Right cardiac atrium (tissue), 5 donors: ENCODE measurements at regions of chr10 and their contacts with region 1.

Region 1: GRCh38 chr10:79195091-79195923 is 126.5 kb downstream of the ZMIZ1 start:
- DNase-seq: peak; percentile 87 to 96 (median 93)
- ATAC-seq: peak; percentile 73 to 77
- H3K4me3 ChIP-seq: no peak overlapping the region
- H3K27ac ChIP-seq: peak overlapping the region; percentile 39
- H3K4me1 ChIP-seq: peaks cover 28% of the 10 kb centered on the region
- H3K27me3 ChIP-seq: no peaks in the 10 kb centered on the region

Region 2: GRCh38 chr10:78047314-78047891 is 1147.9 kb before region 1 on chr10:
- intact Hi-C with region 1: loop called (anchors 5 to 10 kb)
- DNase-seq: peak; percentile 89 to 95 (median 92)
- ATAC-seq: peak; percentile 81 to 86
- H3K4me3 ChIP-seq: no peak overlapping the region
- H3K27ac ChIP-seq: no peak overlapping the region
- H3K4me1 ChIP-seq: peaks cover 4% of the 10 kb centered on the region
- H3K27me3 ChIP-seq: no peaks in the 10 kb centered on the region

Region 3: DNA sequence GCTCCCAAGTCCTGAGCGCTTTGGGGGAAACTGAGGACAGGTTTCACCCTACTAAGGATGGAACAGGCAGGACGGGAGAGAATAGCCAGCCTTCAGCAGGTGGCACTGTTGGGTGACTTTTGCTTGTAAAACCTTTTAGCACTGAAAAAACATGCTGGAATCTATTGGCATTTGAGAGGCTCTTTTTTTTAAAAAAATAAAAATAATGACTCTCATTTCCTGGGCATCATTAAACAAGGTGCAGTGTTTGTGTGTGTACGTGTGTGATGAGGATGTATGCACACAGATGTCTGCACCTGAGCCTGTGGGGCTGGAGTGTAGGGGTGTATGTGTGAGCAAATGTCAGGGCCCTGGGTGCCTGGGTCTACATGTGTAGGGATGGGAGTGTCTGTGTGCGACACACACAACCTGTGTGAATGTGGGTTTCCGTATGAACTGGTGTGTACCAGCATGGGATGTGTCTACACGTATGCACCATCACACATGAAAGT is 983.7 kb before region 1 on chr10:
- intact Hi-C with region 1: loop called in 3 of 4 experiments (anchors 10 kb)
- DNase-seq: peak in 2 of 3 donors; percentile 34 to 71
- ATAC-seq: no peak
- H3K4me3 ChIP-seq: no peak overlapping the region
- H3K27ac ChIP-seq: peak overlapping the region; percentile 31
- H3K4me1 ChIP-seq: peaks cover 12% of the 10 kb centered on the region
- H3K27me3 ChIP-seq: no peaks in the 10 kb centered on the region

Region 4: GRCh38 chr10:78437998-78438906 is 757.1 kb before region 1 on chr10:
- intact Hi-C with region 1: loop called in 1 of 4 experiments (anchors 10 kb)
- DNase-seq: no peak
- ATAC-seq: peak in 1 of 2 donors; percentile 14
- H3K4me3 ChIP-seq: no peak overlapping the region
- H3K27ac ChIP-seq: no peak overlapping the region
- H3K4me1 ChIP-seq: no peaks in the 10 kb centered on the region
- H3K27me3 ChIP-seq: no peaks in the 10 kb centered on the region

Region 5: GRCh38 chr10:79149662-79150443 is 45.5 kb before region 1 on chr10:
- intact Hi-C with region 1: loop called in 1 of 4 experiments (anchors 10 kb)
- DNase-seq: peak; percentile 94 to 96 (median 95)
- ATAC-seq: peak; percentile 62 to 76
- H3K4me3 ChIP-seq: no peak overlapping the region
- H3K27ac ChIP-seq: peak overlapping the region; percentile 97
- H3K4me1 ChIP-seq: peaks cover 77% of the 10 kb centered on the region
- H3K27me3 ChIP-seq: no peaks in the 10 kb centered on the region